ENCODE measurements at regions of chr19 and their contacts with region 1.

Region 1: DNA sequence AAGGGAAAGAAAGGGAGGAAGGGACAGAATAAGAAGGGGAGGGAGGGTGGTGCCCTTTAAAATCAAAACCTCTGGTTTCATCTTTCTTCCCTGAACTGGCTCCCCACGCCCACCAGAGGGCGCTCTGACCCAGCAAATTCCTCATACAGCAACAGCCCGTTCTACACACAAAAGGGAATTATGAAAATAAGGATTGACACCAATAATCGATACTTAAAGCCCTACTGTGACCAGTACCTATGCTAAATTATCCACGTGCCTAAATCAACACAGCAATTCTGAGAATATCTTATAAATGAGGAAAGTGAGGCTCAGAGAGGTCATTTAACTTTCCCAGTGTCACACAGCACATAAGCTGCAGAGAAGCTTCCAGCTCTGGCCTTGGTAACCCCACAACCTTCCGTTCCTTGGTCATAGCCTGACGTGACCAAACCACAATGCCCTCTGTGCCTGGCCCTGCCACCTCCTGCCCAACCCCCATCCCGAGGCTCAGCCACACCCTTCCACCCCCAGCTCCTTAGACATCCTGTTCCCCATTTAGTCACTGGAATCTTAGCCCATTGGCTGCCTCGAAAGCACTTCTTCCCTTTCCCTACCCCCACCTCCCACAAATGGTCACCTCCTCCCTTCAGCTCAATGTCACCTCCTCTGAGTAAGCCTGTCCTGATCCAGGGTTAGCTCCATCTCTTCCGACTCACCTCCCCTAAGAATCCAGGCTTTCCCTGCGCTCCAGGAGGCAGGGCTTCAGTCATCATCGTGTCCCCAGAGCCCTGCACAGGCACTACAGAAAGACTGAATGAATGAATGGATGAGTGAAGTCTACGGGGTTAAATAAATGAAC is 34.2 kb upstream of the PNMA8B start:
- DNase-seq: peak; percentile 55
- H3K4me3 ChIP-seq: no peak overlapping the region
- H3K27ac ChIP-seq: no peak overlapping the region
- H3K4me1 ChIP-seq: no peaks in the 10 kb centered on the region
- H3K27me3 ChIP-seq: peaks cover 0 to 1% of the 10 kb centered on the region in 2 experiments
- CTCF ChIP-seq: peak; percentile 86 to 94
- POLR2A ChIP-seq: no peak

Region 2: DNA sequence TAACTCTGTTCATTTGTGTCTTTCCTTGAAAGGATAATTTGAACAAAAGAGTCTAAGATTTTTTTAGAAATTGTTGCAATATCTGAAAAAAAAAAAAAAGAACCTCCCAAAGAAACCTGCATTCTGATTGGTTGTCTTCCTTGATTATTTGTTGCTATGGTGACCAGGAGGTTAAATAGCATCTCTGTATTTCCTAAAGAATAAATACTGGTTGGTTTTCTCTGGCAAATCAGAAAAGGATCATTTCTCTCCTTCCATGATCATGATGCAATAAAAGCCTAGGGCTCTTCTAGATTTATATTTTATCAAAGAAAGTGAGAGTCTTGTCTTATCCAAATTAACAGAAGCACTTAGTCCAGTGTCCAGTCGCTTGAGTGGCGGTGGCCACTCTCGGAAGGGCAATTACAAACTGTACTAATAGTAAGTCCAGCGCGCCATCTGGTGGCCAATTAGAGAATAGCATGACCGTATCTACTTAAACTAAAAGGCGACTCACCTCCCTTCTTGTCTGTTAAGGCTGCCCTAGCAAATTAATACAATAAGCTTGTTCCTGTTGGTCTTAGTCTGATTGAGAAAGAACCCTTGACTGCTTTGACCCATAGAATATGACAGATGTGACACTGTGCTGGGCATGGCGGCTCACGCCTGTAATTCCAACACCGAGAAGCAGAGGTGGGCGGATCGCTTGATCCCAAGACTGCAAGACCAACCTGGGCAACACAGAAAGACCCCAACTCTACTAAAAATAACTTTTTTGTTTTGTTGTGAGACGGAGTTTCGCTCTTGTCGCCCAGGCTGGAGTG is 12.8 kb after region 1 on chr19:
- CTCF ChIA-PET with region 1: interaction called, 172 read pairs
- POLR2A ChIA-PET with region 1: no interaction called
- dilution Hi-C with region 1: no loop called
- intact Hi-C with region 1: loop called (anchors 1 kb)
- DNase-seq: peak; percentile 87
- H3K4me3 ChIP-seq: no peak overlapping the region
- H3K27ac ChIP-seq: no peak overlapping the region
- H3K4me1 ChIP-seq: no peaks in the 10 kb centered on the region
- H3K27me3 ChIP-seq: no peaks in the 10 kb centered on the region
- CTCF ChIP-seq: peak; percentile 72 to 74
- POLR2A ChIP-seq: no peak

Region 3: GRCh38 chr19:46571531-46571930 is 41.7 kb after region 1 on chr19:
- CTCF ChIA-PET with region 1: interaction called, 12 read pairs
- POLR2A ChIA-PET with region 1: no interaction called
- dilution Hi-C with region 1: no loop called
- intact Hi-C with region 1: no loop called
- DNase-seq: no peak
- H3K4me3 ChIP-seq: no peak overlapping the region
- H3K27ac ChIP-seq: no peak overlapping the region
- H3K4me1 ChIP-seq: no peaks in the 10 kb centered on the region
- H3K27me3 ChIP-seq: no peaks in the 10 kb centered on the region
- CTCF ChIP-seq: peak in 1 of 2 donors; percentile 22
- POLR2A ChIP-seq: no peak

Region 4: GRCh38 chr19:46579361-46579879 is 49.6 kb after region 1 on chr19:
- CTCF ChIA-PET with region 1: interaction called, 23 read pairs
- POLR2A ChIA-PET with region 1: no interaction called
- dilution Hi-C with region 1: no loop called
- intact Hi-C with region 1: no loop called
- DNase-seq: no peak
- H3K4me3 ChIP-seq: no peak overlapping the region
- H3K27ac ChIP-seq: no peak overlapping the region
- H3K4me1 ChIP-seq: no peaks in the 10 kb centered on the region
- H3K27me3 ChIP-seq: peaks cover 0 to 5% of the 10 kb centered on the region in 2 experiments
- CTCF ChIP-seq: peak; percentile 31 to 48
- POLR2A ChIP-seq: no peak

Region 5: DNA sequence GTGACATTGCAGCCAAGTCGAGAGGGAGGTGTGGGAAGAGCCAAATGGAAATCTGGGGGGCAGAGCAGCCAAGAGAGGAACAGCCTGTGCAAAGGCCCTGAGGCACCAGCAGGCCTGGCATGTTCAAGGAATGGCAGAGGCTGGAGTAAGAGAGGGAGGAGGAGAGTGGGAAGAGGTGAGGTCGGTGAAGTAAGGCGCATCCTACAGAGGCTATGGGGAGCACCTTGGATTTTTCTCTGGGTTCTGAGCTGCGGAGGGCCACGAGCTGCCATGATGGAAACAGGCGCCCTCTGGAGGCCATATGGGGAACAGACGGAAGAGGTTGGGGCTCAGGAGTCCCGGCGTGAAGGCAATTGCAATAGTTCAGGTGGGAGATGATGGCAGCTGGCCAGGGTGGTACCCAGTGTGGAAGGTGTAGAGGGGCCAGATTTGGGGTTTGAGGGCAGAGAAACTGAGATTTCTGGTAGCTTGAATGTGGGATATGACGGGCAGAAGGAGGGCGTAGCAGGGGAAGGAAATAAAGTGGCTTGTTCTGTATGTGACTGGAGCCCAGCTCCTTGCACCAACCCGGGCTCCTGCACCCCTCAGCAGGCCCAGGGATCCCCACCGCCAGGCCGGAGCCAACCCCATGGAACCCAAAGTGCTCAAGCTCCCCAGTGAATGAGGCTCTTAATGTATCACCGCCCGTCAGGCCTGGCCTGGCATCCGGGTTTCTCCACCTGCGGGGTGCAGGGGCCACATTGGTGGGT is 236.9 kb after region 1 on chr19:
- CTCF ChIA-PET with region 1: interaction called, 10 read pairs
- POLR2A ChIA-PET with region 1: no interaction called
- dilution Hi-C with region 1: no loop called
- intact Hi-C with region 1: no loop called
- DNase-seq: peak; percentile 27
- H3K4me3 ChIP-seq: no peak overlapping the region
- H3K27ac ChIP-seq: no peak overlapping the region
- H3K4me1 ChIP-seq: no peaks in the 10 kb centered on the region
- H3K27me3 ChIP-seq: no peaks in the 10 kb centered on the region
- CTCF ChIP-seq: peak; percentile 85
- POLR2A ChIP-seq: no peak

Measured in endothelial cell of umbilical vein (primary cell).